ENCODE measurements at regions of chr17 and their contacts with region 1.

Region 1: GRCh38 chr17:74203439-74204240 is at the start of gene RPL38:
- DNase-seq: peak; percentile 96
- ATAC-seq: peak; percentile 98
- H3K4me3 ChIP-seq: peak within 1 kb of the TSS; percentile 90 to 94 (median 91)
- H3K4me3 Mint-ChIP-seq: peak within 1 kb of the TSS; percentile 98
- H3K27ac ChIP-seq: peak within 1 kb of the TSS; percentile 70 to 85
- H3K27ac Mint-ChIP-seq: peak within 1 kb of the TSS; percentile 94
- H3K4me1 ChIP-seq: peaks cover 34 to 40% of the 10 kb centered on the region in 2 donors
- H3K4me1 Mint-ChIP-seq: peaks cover 33% of the 10 kb centered on the region
- H3K27me3 ChIP-seq: peaks cover 0 to 40% (median 8%) of the 10 kb centered on the region in 4 experiments
- H3K27me3 Mint-ChIP-seq: peaks cover 29% of the 10 kb centered on the region
- CTCF ChIP-seq: peak; percentile 84
- total RNA-seq, gene RPL38: 1,416 and 1,550 TPM in 2 replicates

Region 2: GRCh38 chr17:74190172-74190571 is 13.5 kb before region 1 on chr17:
- CTCF ChIA-PET with region 1: interaction called, 5 read pairs
- POLR2A ChIA-PET with region 1: no interaction called
- intact Hi-C with region 1: loop called (anchors 1 kb)
- DNase-seq: peak; percentile 41
- ATAC-seq: peak; percentile 77
- H3K4me3 ChIP-seq: no peak overlapping the region
- H3K4me3 Mint-ChIP-seq: no peak overlapping the region
- H3K27ac ChIP-seq: no peak overlapping the region
- H3K27ac Mint-ChIP-seq: no peak overlapping the region
- H3K4me1 ChIP-seq: no peaks in the 10 kb centered on the region
- H3K4me1 Mint-ChIP-seq: no peaks in the 10 kb centered on the region
- H3K27me3 ChIP-seq: peaks cover 0 to 22% (median 6%) of the 10 kb centered on the region in 4 experiments
- H3K27me3 Mint-ChIP-seq: peaks cover 33% of the 10 kb centered on the region
- CTCF ChIP-seq: no peak